ENCODE measurements at regions of chr15 and their contacts with region 1.

Region 1: GRCh38 chr15:81265944-81266775 is 57.8 kb downstream of the STARD5 start:
- DNase-seq: peak; percentile 92
- ATAC-seq: peak; percentile 93
- H3K4me3 Mint-ChIP-seq: peak overlapping the region; percentile 53
- H3K27ac Mint-ChIP-seq: peak overlapping the region; percentile 75
- H3K4me1 Mint-ChIP-seq: peaks cover 37% of the 10 kb centered on the region
- H3K27me3 Mint-ChIP-seq: peaks cover 2% of the 10 kb centered on the region

Region 2: GRCh38 chr15:81000624-81001151 is 265.5 kb before region 1 on chr15 and contains the start of gene TLNRD1:
- CTCF ChIA-PET with region 1: interaction called, 23 read pairs
- POLR2A ChIA-PET with region 1: no interaction called
- intact Hi-C with region 1: loop called (anchors 1 to 2 kb)
- DNase-seq: peak; percentile 90
- ATAC-seq: peak; percentile 70
- H3K4me3 Mint-ChIP-seq: peak within 1 kb of the TSS; percentile 92
- H3K27ac Mint-ChIP-seq: peak within 1 kb of the TSS; percentile 92
- H3K4me1 Mint-ChIP-seq: peaks cover 45% of the 10 kb centered on the region
- H3K27me3 Mint-ChIP-seq: no peaks in the 10 kb centered on the region
- total RNA-seq, gene TLNRD1: 11.2 to 16.9 TPM

Region 3: GRCh38 chr15:81133782-81134461 is 132.2 kb before region 1 on chr15 and contains the start of gene CFAP161:
- CTCF ChIA-PET with region 1: interaction called, 10 read pairs
- POLR2A ChIA-PET with region 1: no interaction called
- intact Hi-C with region 1: no loop called
- DNase-seq: peak; percentile 70
- ATAC-seq: peak; percentile 86
- H3K4me3 Mint-ChIP-seq: peak within 1 kb of the TSS; percentile 18
- H3K27ac Mint-ChIP-seq: no peak within 1 kb of the TSS
- H3K4me1 Mint-ChIP-seq: peaks cover 2% of the 10 kb centered on the region
- H3K27me3 Mint-ChIP-seq: peaks cover 45% of the 10 kb centered on the region
- total RNA-seq, gene CFAP161: not detected

Region 4: DNA sequence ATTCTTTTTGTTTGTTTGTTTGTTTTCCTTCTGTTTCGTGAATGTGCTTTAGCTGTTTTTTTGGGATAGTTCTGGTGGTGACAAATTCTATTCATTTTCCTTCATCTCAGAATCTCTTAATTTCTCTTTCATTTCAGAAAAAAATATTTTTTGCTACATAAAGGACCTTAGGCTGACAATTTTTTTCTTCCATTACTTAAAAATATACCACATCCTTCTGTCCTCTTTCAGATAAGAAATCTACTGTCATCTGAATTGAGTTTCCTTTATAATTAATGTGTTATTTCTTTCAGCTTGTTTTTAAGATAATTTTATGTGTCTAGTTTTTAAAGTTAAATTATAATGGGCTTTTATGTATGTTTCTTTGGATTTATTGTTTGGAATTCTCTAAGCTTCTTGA is 21.9 kb before region 1 on chr15:
- CTCF ChIA-PET with region 1: interaction called, 16 read pairs
- POLR2A ChIA-PET with region 1: no interaction called
- intact Hi-C with region 1: no loop called
- DNase-seq: no peak
- ATAC-seq: no peak
- H3K4me3 Mint-ChIP-seq: no peak overlapping the region
- H3K27ac Mint-ChIP-seq: no peak overlapping the region
- H3K4me1 Mint-ChIP-seq: no peaks in the 10 kb centered on the region
- H3K27me3 Mint-ChIP-seq: peaks cover 2% of the 10 kb centered on the region

Region 5: DNA sequence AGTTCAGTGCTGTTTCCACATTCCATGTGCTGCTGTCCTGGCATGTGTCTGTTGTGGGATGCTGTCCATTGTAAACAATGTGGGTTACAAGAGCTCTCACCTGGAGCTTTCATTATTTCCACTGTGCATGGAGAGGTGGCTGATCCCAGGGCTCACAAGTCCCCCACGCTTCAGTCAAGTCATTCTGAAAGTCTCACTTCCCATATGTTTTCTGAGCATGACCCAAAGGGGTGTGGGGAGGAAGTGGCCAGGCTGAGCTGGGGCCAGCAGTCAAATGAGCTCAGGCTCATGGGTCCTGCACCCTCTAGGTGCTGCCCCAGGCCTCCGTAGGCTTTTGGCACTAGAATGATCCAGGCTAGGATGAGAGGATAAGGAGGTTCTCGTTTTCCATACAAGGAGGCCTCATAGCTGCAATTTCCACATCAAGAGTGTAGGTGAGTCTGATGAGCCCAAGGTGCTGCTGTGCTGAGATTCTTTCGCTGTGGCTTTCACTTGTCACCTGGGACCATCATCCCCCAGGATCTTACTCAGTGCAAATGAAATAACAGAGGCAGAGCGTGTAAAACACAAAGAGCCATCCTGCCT is 35.7 kb after region 1 on chr15:
- CTCF ChIA-PET with region 1: interaction called, 31 read pairs
- POLR2A ChIA-PET with region 1: interaction called, 3 read pairs
- intact Hi-C with region 1: no loop called
- DNase-seq: peak; percentile 67
- ATAC-seq: peak; percentile 45
- H3K4me3 Mint-ChIP-seq: peak overlapping the region; percentile 94
- H3K27ac Mint-ChIP-seq: peak overlapping the region; percentile 98
- H3K4me1 Mint-ChIP-seq: peaks cover 66% of the 10 kb centered on the region
- H3K27me3 Mint-ChIP-seq: no peaks in the 10 kb centered on the region

Region 6: GRCh38 chr15:81342561-81342960 is 76.4 kb after region 1 on chr15:
- CTCF ChIA-PET with region 1: interaction called, 11 read pairs
- POLR2A ChIA-PET with region 1: no interaction called
- intact Hi-C with region 1: no loop called
- DNase-seq: no peak
- ATAC-seq: no peak
- H3K4me3 Mint-ChIP-seq: no peak overlapping the region
- H3K27ac Mint-ChIP-seq: no peak overlapping the region
- H3K4me1 Mint-ChIP-seq: peaks cover 10% of the 10 kb centered on the region
- H3K27me3 Mint-ChIP-seq: no peaks in the 10 kb centered on the region

Region 7: DNA sequence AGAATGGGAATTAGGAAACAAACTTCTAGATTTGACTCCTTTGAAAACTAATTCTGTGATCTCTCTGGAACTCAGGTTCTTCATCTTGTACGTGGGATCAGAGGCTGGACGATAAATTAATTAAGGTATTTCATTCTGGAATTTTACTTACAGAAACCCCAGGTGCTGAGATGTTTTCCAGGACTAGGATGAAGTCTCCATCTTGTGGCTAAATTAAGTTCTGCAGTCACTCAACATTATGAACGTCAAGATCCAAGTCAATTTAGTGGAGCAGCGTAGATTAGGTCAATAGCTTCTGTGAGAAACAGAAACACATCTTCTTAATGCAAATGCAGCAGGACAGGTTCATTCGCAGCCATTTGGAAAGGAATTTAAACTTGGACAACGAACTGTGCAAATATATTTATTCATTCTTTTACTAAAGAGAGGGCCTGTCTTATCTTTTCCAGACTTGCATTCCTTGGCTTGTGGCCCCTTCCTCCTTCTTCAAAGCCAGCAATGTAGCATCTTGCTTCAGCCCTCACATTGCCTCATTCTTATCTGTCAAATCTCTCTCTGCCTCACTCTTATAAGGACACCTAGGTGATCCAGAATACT is 134.6 kb after region 1 on chr15:
- CTCF ChIA-PET with region 1: interaction called, 43 read pairs
- POLR2A ChIA-PET with region 1: no interaction called
- intact Hi-C with region 1: loop called in 1 of 2 experiments (anchors 2 kb)
- DNase-seq: no peak
- ATAC-seq: peak; percentile 44
- H3K4me3 Mint-ChIP-seq: no peak overlapping the region
- H3K27ac Mint-ChIP-seq: no peak overlapping the region
- H3K4me1 Mint-ChIP-seq: peaks cover 3% of the 10 kb centered on the region
- H3K27me3 Mint-ChIP-seq: no peaks in the 10 kb centered on the region

Region 8: DNA sequence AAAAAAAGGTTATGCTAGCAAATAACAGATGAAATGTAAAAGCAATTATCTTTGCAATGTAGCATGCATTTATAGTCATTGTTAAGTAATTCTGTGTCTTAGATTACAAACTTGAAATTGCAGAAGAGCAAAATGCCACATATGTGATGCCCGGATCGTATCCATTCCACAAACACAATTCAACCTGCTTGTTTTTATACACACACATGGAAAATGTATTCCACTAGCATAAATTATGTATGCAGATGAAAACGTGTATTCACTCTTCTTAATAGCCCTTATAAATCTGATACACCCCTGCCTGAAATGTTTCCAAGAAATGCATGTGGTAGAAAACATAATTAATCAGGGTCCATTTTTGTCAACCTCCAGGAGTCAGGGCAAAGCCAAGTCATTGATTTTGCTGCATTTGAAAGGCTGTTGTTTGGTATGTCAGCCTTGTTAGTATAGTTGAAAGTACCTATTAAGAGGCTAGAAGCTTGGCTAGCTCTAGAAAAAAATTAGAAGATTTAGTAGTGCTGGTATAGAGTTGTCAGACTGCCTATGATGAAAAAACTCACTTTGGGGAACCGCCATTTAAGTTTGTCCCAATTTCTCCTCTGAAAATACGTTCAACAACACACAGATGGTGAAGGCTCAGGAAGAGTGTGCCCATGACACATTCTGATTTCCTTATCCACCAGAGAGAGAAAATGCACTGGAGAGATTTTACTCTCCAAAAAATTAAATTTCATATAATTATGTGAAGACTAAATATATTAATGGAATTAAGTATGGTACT is 177.1 kb after region 1 on chr15:
- CTCF ChIA-PET with region 1: no interaction called
- POLR2A ChIA-PET with region 1: no interaction called
- intact Hi-C with region 1: no loop called
- DNase-seq: no peak
- ATAC-seq: no peak
- H3K4me3 Mint-ChIP-seq: no peak overlapping the region
- H3K27ac Mint-ChIP-seq: no peak overlapping the region
- H3K4me1 Mint-ChIP-seq: no peaks in the 10 kb centered on the region
- H3K27me3 Mint-ChIP-seq: peaks cover 12% of the 10 kb centered on the region

Measured in activated CD4-positive, alpha-beta T cell treated with anti-CD3 and anti-CD28 coated beads for 36 hours (primary cell).